ENCODE measurements at regions of chr5 and their contacts with region 1.

Region 1: GRCh38 chr5:135829681-135830383 is 4.6 kb upstream of the SLC25A48 start:
- DNase-seq: no peak
- H3K4me3 ChIP-seq: no peak overlapping the region
- H3K27me3 ChIP-seq: peaks cover 14% of the 10 kb centered on the region
- CTCF ChIP-seq: peak; percentile 82

Region 2: DNA sequence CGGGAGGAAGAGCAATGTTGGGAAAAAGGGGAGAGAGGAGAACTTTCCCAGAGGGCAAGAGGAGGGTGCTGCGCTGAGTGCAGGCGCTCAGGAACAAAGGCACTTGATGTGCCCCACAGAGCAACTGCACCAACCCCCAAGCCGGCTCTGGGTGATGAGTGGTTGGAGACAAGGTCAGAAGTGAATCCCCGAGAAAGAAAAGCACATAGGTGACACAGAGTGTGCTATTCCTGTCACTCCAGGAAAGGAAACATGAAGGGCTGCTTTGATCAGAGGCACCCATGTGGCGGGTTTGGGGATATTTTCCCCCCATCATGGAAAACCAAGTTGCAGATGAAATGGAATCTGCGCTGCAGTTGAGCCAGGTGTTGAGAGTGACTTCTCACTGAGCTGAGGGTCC is 16.1 kb before region 1 on chr5:
- CTCF ChIA-PET with region 1: interaction called, 39 read pairs
- POLR2A ChIA-PET with region 1: no interaction called
- DNase-seq: no peak
- H3K4me3 ChIP-seq: no peak overlapping the region
- H3K27me3 ChIP-seq: no peaks in the 10 kb centered on the region
- CTCF ChIP-seq: no peak

Region 3: GRCh38 chr5:135843571-135844337 is 13.9 kb after region 1 on chr5:
- CTCF ChIA-PET with region 1: interaction called, 25 read pairs
- POLR2A ChIA-PET with region 1: no interaction called
- DNase-seq: no peak
- H3K4me3 ChIP-seq: no peak overlapping the region
- H3K27me3 ChIP-seq: no peaks in the 10 kb centered on the region; the same call in 1 of the 2 replicates
- CTCF ChIP-seq: no peak